ENCODE measurements at regions of chr7 and their contacts with region 1.

Region 1: GRCh38 chr7:30510124-30511075 is 5.8 kb upstream of the GGCT start:
- DNase-seq: no peak
- H3K4me3 ChIP-seq: no peak overlapping the region
- H3K27ac ChIP-seq: no peak overlapping the region
- H3K4me1 ChIP-seq: no peaks in the 10 kb centered on the region
- H3K27me3 ChIP-seq: no peaks in the 10 kb centered on the region
- CTCF ChIP-seq: peak in 2 of 3 experiments; percentile 74 to 75; a peak in 3 of 4 replicates
- EP300 ChIP-seq: no peak
- POLR2A ChIP-seq: no peak
- RAD21 ChIP-seq: peak; percentile 74 to 75

Region 2: GRCh38 chr7:30276203-30276900 is 234.0 kb before region 1 on chr7:
- CTCF ChIA-PET with region 1: interaction called, 17 read pairs
- POLR2A ChIA-PET with region 1: no interaction called
- DNase-seq: peak; percentile 15 to 63
- H3K4me3 ChIP-seq: no peak overlapping the region
- H3K27ac ChIP-seq: no peak overlapping the region
- H3K4me1 ChIP-seq: peaks cover 0 to 1% (median 0%) of the 10 kb centered on the region in 4 experiments; a peak in 1 of 7 replicates
- H3K27me3 ChIP-seq: no peaks in the 10 kb centered on the region
- CTCF ChIP-seq: peak; percentile 58 to 89 (median 87)
- EP300 ChIP-seq: no peak
- POLR2A ChIP-seq: no peak
- RAD21 ChIP-seq: peak; percentile 95 to 96

Region 3: GRCh38 chr7:30521532-30521931 is 11.1 kb after region 1 on chr7:
- CTCF ChIA-PET with region 1: interaction called, 22 read pairs
- POLR2A ChIA-PET with region 1: interaction called, 3 read pairs
- DNase-seq: no peak
- H3K4me3 ChIP-seq: no peak overlapping the region
- H3K27ac ChIP-seq: no peak overlapping the region
- H3K4me1 ChIP-seq: no peaks in the 10 kb centered on the region
- H3K27me3 ChIP-seq: no peaks in the 10 kb centered on the region
- CTCF ChIP-seq: no peak
- EP300 ChIP-seq: no peak
- POLR2A ChIP-seq: no peak
- RAD21 ChIP-seq: no peak

Region 4: GRCh38 chr7:30531286-30531685 is 20.9 kb after region 1 on chr7:
- CTCF ChIA-PET with region 1: interaction called, 25 read pairs
- POLR2A ChIA-PET with region 1: interaction called, 3 read pairs
- DNase-seq: no peak
- H3K4me3 ChIP-seq: no peak overlapping the region
- H3K27ac ChIP-seq: no peak overlapping the region
- H3K4me1 ChIP-seq: no peaks in the 10 kb centered on the region
- H3K27me3 ChIP-seq: no peaks in the 10 kb centered on the region
- CTCF ChIP-seq: no peak
- EP300 ChIP-seq: no peak
- POLR2A ChIP-seq: no peak
- RAD21 ChIP-seq: no peak

Region 5: DNA sequence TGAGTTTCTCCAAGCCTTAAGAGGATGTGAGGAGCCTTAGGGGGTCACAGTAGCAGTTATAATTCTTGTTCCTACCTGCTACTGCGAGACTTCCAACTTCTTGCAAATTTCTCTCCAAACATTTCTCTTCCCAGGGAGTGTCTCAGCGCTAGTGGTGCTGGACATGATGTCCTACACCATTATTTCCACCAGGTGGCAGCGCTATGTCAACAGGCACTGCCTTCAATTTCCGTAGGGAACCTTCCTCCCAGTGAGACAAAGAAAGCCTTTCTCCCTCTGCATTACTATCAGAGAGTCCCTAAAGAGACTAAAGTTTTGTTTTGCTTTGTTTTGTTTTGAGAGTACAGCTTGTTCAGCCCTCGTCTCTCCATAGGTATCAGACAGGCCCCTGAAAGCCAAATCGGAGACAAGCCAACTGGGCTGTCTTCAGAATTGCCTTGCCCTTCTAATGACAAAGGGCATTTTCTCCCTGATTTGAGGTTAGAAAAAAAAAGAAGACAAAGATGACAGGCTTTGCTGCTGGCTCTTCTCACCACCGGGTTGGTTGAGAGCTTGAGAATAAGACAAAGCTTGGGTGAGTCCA is 38.5 kb after region 1 on chr7:
- CTCF ChIA-PET with region 1: interaction called, 24 read pairs
- POLR2A ChIA-PET with region 1: no interaction called
- DNase-seq: peak in 1 of 2 experiments; percentile 66
- H3K4me3 ChIP-seq: no peak overlapping the region; a peak in 1 of 8 replicates
- H3K27ac ChIP-seq: no peak overlapping the region
- H3K4me1 ChIP-seq: peaks cover 0 to 8% (median 1%) of the 10 kb centered on the region in 4 experiments; a peak in 2 of 7 replicates
- H3K27me3 ChIP-seq: no peaks in the 10 kb centered on the region
- CTCF ChIP-seq: peak; percentile 71 to 89 (median 80)
- EP300 ChIP-seq: no peak
- POLR2A ChIP-seq: no peak
- RAD21 ChIP-seq: peak; percentile 75 to 78

Measured in H1 (cell line).